WTC11 (cell line): ENCODE measurements at regions of chr12 and their contacts with region 1.

Region 1: DNA sequence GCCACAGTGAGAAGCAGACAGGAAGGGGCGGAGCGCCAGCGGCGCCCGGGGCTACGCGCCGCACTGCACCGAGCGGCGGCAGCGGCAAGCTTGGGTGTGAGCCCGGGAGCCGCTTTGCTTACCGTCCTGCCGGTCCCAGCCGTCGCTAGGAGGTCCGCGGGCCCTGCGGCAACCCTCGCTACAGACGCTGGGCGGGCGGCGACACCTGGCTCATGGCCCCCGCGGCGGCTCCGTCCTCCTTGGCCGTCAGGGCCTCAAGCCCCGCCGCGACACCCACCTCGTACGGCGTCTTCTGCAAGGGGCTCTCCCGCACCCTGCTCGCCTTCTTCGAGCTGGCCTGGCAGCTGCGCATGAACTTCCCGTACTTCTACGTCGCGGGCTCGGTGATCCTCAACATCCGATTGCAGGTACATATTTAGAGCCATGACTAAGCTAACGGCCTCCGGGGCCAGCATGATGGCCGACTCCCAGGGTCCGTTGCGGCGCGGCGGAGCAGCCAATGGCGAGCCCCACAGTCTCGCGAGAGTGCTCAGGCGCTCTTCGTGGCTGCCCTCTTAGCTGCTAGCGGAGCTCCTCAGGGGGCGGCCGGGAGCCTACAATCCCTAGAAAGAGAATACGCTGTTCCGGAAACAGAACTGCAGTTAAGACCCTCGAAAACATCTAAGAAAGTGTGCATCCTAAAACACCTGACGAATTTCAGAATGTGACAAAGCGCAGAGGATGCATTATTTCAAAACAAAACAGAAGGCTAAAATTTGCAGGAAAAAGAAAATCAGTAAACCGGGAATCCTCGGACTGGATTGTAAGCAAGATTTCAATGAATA is at the start of gene SMIM10L1:
- DNase-seq: peak; percentile 88
- ATAC-seq: peak; percentile 99
- H3K4me3 Mint-ChIP-seq: peak within 1 kb of the TSS; percentile 98
- H3K27ac Mint-ChIP-seq: peak within 1 kb of the TSS; percentile 99
- H3K4me1 Mint-ChIP-seq: peaks cover 58% of the 10 kb centered on the region
- H3K27me3 Mint-ChIP-seq: no peaks in the 10 kb centered on the region
- CTCF ChIP-seq: no peak
- total RNA-seq, gene SMIM10L1: 11.8 to 12.3 TPM (median 12.2 TPM) in 3 replicates

Region 2: GRCh38 chr12:11026121-11026520 is 145.2 kb before region 1 on chr12:
- CTCF ChIA-PET with region 1: interaction called, 12 read pairs
- POLR2A ChIA-PET with region 1: no interaction called
- DNase-seq: peak; percentile 63
- ATAC-seq: peak; percentile 98
- H3K4me3 Mint-ChIP-seq: no peak overlapping the region
- H3K27ac Mint-ChIP-seq: no peak overlapping the region
- H3K4me1 Mint-ChIP-seq: no peaks in the 10 kb centered on the region
- H3K27me3 Mint-ChIP-seq: no peaks in the 10 kb centered on the region
- CTCF ChIP-seq: peak; percentile 45; the same call in 1 of the 2 replicates

Region 3: DNA sequence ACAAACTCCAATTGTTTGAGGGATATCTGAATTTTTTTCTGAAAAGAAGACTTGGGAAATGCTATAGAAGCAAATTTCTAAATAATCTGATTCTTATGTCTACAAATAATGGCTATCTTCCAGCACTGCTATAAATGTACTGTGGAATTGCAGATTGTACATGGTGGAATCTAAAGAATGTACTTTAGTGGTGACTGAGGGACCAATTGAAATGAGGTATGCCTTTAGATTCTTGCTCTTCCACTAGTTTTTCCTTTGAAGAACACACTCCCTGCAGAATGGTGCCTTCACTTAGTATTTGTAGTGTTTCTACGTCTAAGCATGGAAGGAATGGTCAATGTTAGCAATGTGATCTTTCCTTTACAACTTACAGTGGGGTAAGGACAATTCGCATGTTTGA is 150.6 kb after region 1 on chr12:
- CTCF ChIA-PET with region 1: no interaction called
- POLR2A ChIA-PET with region 1: interaction called, 10 read pairs
- DNase-seq: no peak
- ATAC-seq: no peak
- H3K4me3 Mint-ChIP-seq: no peak overlapping the region
- H3K27ac Mint-ChIP-seq: no peak overlapping the region
- H3K4me1 Mint-ChIP-seq: no peaks in the 10 kb centered on the region
- H3K27me3 Mint-ChIP-seq: peaks cover 2% of the 10 kb centered on the region; the same call in 1 of the 2 replicates
- CTCF ChIP-seq: no peak